ENCODE measurements at regions of chr19 and their contacts with region 1.

Region 1: GRCh38 chr19:14048443-14049153 is 13.3 kb downstream of the PALM3 start:
- DNase-seq: no peak
- H3K4me3 ChIP-seq: no peak overlapping the region
- H3K27ac ChIP-seq: no peak overlapping the region
- H3K27me3 ChIP-seq: no peaks in the 10 kb centered on the region
- CTCF ChIP-seq: peak; percentile 80

Region 2: DNA sequence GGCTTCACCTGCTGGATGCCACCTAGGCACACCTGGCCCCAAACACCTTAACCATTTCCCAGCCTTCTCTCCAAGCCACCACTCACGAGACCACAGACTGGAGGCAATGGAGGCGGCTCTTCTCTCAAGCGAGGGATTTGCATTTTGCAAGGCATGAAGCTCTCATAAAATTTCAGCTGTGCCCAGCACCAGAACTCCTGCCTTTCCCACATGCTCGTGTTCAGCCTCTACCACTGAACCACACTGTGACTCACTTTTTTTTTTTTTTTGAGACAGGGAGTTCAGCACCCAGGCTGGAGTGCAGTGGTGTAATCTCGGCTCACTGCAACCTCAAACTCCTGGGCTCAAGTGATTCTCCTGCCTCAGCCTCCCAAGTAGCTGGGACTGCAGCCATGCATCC is 161.1 kb before region 1 on chr19:
- CTCF ChIA-PET with region 1: no interaction called
- POLR2A ChIA-PET with region 1: no interaction called
- DNase-seq: no peak
- H3K4me3 ChIP-seq: no peak overlapping the region
- H3K27ac ChIP-seq: no peak overlapping the region
- H3K27me3 ChIP-seq: peaks cover 10% of the 10 kb centered on the region
- CTCF ChIP-seq: no peak

Region 3: GRCh38 chr19:14031719-14032480 is 16.7 kb before region 1 on chr19 and contains the start of gene IL27RA:
- CTCF ChIA-PET with region 1: interaction called, 13 read pairs
- POLR2A ChIA-PET with region 1: no interaction called
- DNase-seq: no peak
- H3K4me3 ChIP-seq: peak within 1 kb of the TSS; percentile 73
- H3K27ac ChIP-seq: no peak within 1 kb of the TSS
- H3K27me3 ChIP-seq: peaks cover 20% of the 10 kb centered on the region
- CTCF ChIP-seq: peak; percentile 75
- polyA plus RNA-seq, gene IL27RA: 4.5 and 5.4 TPM in 2 replicates

Region 4: DNA sequence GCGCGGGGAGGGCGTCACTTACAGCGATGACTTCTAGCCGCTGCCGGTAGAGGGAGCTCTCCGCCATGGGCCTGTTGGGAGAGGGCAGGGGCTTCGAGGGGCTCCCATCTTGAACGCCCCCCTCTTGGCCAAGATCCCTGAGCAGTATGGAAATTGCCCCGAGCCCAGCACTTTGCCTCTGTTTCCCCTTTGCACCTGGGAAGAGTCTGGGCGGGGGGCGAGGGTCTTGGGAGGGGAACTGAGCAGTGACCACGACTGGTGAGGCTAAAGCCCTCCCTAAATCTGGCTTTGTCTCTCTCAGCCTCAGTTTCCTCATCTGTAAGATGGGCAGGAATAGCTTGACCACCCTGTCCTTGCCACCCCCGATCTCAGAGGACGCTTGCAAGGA is 10.5 kb after region 1 on chr19:
- CTCF ChIA-PET with region 1: interaction called, 12 read pairs
- POLR2A ChIA-PET with region 1: interaction called, 4 read pairs
- DNase-seq: no peak
- H3K4me3 ChIP-seq: no peak overlapping the region
- H3K27ac ChIP-seq: no peak overlapping the region
- H3K27me3 ChIP-seq: peaks cover 14% of the 10 kb centered on the region
- CTCF ChIP-seq: peak; percentile 68

Measured in AG04450 (cell line).